Psoas muscle (tissue), 8 donors: ENCODE measurements at regions of chr5 and their contacts with region 1.

Region 1: DNA sequence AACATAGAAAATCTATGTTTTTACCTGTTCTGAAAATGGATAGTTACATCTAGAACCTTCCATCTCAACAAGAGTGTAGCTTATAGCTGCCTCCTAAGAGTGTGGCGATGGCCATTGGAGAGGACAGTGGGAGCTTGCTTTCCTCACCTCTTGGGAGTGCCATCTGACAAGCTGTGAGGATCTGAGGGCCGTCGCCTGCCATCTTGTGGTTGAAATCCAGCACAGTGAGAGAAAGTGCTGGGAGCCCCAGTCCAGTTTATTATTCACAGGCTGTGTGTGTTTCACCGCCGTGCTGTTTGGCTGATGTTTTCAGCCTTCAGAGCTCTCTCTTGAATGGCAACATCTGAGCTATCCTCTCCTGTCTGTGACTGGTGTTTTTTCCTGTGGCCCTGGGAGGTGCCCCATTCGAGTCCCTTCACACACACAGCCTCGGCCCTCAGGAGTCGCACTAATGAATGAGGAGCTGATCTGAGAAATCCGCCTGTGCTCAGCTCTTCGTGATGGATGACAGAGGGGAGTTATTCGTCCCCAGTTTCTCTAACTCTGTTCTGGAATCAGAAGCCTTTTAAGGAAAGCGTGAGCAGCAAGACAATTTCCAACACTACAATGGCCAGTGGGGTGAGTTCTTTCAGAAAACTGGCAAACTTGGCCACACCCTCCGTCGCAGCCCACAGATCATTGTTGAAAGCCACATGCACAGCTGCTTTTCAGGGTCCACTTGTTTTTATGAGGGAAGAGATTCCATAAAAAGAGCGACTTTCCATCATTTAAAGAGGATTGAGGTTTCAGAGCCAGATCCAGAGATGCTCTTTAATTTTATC is 170.3 kb downstream of the PDZD2 start:
- DNase-seq: peak; percentile 59 to 78
- ATAC-seq: peak; percentile 79 to 94 (median 90)
- H3K4me3 ChIP-seq: no peak overlapping the region
- H3K27ac ChIP-seq: no peak overlapping the region
- H3K4me1 ChIP-seq: no peaks in the 10 kb centered on the region
- H3K27me3 ChIP-seq: no peaks in the 10 kb centered on the region
- CTCF ChIP-seq: peak; percentile 68

Region 2: DNA sequence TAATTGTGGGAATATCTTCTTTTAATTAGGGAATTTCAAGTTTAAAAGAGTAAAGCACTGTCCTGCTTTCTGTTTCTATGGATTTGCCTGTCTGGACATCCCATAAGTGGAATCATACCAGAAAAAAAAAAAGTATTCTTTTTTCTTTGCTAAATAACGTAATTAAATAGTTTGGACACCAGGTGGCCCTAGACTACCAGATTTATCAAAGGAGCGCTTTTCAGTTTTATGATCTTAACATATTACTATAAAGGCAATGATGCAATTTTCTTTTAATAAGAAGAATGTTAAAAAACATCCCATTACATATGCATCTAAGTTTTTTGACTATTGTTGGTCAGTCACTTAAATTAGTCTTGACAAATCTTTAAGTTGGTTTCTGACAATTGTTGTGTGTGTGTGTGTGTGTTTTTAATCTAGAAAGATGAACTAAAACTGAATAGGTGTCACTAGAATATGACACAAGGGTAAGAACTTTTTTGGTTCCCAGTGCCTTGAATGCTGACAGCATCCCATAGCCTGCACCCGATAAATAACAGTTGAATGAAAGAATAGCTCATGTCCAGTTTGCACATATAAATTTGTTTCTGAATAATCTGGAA is 227.7 kb before region 1 on chr5:
- intact Hi-C with region 1: loop called (anchors 1 to 5 kb)
- DNase-seq: no peak
- ATAC-seq: peak in 1 of 4 donors; percentile 30
- H3K4me3 ChIP-seq: no peak overlapping the region
- H3K27ac ChIP-seq: no peak overlapping the region
- H3K4me1 ChIP-seq: no peaks in the 10 kb centered on the region
- H3K27me3 ChIP-seq: peaks cover 0 to 1% (median 0%) of the 10 kb centered on the region in 3 donors
- CTCF ChIP-seq: peak; percentile 46

Region 3: DNA sequence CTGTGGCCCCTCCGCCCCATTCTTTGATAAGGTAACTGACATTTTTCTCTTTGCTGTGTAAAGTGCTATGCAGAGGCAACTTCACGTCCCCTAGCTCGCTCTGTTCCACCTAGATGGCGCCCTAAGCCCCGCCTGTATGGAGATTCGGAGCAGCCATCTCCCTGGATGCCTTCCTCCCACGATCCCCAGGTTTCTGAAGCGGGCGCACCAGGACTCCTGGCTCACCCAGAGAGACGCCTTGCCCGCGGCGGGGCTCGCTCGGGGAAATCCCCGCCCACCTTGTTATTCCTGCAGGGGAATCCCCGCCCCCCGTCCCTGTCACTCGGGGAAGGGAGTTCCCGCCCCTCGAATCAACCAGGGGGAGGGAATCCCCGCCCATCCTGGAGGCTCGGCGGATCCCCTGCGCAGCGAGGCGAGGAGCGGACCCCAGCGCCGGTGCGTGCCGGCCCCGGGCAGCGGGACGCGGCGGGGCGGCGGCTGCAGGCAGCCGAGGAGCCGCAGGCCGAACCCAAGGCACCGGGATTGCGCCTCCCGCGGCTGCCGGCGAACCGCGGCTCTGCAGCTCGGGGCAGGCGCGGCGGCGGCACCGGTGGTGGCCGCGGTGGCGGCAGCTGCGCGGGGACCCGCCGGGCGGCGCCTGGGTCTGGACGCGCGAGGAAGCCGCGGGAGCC is 170.4 kb before region 1 on chr5 and contains the start of gene PDZD2:
- intact Hi-C with region 1: loop called (anchors 5 kb)
- DNase-seq: peak; percentile 82 to 85
- ATAC-seq: peak; percentile 78 to 88 (median 83)
- H3K4me3 ChIP-seq: peak within 1 kb of the TSS; percentile 88
- H3K27ac ChIP-seq: peak within 1 kb of the TSS; percentile 27
- H3K4me1 ChIP-seq: peaks cover 9% of the 10 kb centered on the region
- H3K27me3 ChIP-seq: peaks cover 0 to 7% (median 0%) of the 10 kb centered on the region in 3 donors
- CTCF ChIP-seq: peak; percentile 37
- total RNA-seq, gene PDZD2: 4.4 to 17.5 (median 7.0) TPM